Dorsolateral prefrontal cortex (tissue), 120 donors: ENCODE measurements at regions of chr18 and their contacts with region 1.

Region 1: DNA sequence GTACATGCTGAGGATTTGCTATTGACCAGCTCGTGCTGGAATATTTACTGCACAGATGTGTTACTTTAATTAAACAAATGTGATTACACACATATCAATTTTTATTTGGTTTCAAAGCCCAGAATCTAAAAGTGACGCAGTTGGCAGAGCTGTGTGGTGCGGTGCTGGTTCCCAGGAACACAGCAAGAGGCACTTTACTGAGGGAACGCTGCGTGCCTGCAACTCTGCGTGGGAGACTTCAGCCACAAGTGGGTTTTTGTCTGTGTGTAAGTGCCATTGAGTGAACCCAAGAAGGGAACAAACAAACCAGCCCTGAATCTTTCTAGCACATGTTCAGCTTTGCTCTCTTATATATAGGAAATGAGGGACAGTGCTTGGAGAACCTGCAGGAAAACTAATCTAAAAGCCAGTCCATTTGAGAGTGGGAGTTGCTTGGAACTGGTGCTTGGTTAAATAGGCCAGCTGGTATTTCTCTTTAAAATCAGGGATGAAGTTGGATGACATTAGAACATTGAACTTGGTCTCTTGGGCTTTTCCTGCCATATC is 196.6 kb upstream of the CELF4 start:
- DNase-seq: peak in 8 of 10 donors; percentile 23 to 82 (median 68)
- H3K4me3 ChIP-seq: no peak overlapping the region
- H3K27ac ChIP-seq: peak overlapping the region in 31 of 59 donors; percentile 13 to 76 (median 43)
- H3K27me3 ChIP-seq: no peaks in the 10 kb centered on the region
- CTCF ChIP-seq: no peak

Region 2: GRCh38 chr18:37578886-37579513 is 183.1 kb before region 1 on chr18:
- intact Hi-C with region 1: loop called in 1 of 2 experiments (anchors 10 kb)
- DNase-seq: peak in 2 of 10 donors; percentile 63 to 67
- H3K4me3 ChIP-seq: peak overlapping the region in 10 of 59 donors; percentile 7 to 21 (median 16)
- H3K27ac ChIP-seq: peak overlapping the region in 7 of 59 donors; percentile 2 to 59 (median 18)
- H3K27me3 ChIP-seq: peaks cover 0 to 4% (median 0%) of the 10 kb centered on the region in 45 donors
- CTCF ChIP-seq: peak; percentile 27 to 68 (median 56)